A673 (cell line): ENCODE measurements at regions of chr1 and their contacts with region 1.

Region 1: DNA sequence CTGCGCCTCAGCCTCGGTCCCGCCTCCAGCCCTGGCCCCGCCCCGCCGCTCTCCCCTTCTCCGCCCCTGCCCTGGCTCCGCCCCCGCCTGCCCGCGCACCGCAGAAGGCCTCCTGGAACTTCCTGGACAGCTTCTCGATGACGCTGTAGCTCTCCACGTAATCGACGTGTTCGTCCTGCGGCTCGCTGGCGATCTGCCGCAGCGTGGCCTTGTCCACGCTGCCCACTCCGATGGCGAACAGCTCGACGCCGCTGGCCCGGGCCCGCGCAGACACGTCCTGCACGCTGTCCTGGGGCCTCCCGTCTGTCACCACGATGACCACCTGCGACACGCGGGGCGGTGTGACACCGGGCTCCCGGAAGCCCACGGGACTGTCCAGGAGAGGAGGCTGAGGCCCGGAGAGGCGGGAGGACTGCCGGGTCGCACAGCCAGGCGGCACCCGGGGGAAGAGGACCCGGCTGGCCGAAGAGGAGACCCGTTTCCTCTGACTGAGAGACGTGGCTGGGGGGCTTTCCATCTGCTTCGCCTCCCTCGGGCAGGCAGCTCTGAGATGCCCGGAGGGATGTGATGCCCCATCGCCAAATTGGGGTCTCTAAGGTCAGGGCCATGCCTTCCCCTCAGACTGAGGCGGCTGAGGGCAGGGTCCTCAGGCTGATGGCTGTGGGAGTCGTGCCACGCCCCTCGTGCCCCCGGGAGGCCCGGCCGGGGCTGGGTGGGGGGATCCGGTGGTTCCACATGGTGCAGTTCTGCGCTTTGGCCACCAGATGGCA is 4.6 kb downstream of the MATN1 start:
- DNase-seq: peak; percentile 96
- H3K4me3 ChIP-seq: peak overlapping the region; percentile 64
- H3K27ac ChIP-seq: peak overlapping the region; percentile 92
- H3K4me1 ChIP-seq: peaks cover 5% of the 10 kb centered on the region
- H3K27me3 ChIP-seq: no peaks in the 10 kb centered on the region
- CTCF ChIP-seq: peak; percentile 94

Region 2: GRCh38 chr1:29579821-29580425 is 1138.9 kb before region 1 on chr1:
- CTCF ChIA-PET with region 1: no interaction called
- POLR2A ChIA-PET with region 1: interaction called, 15 read pairs
- intact Hi-C with region 1: no loop called
- DNase-seq: no peak
- H3K4me3 ChIP-seq: no peak overlapping the region
- H3K27ac ChIP-seq: no peak overlapping the region
- H3K4me1 ChIP-seq: no peaks in the 10 kb centered on the region
- H3K27me3 ChIP-seq: peaks cover 21% of the 10 kb centered on the region
- CTCF ChIP-seq: no peak

Region 3: GRCh38 chr1:30779294-30780071 is 60.7 kb after region 1 on chr1:
- CTCF ChIA-PET with region 1: interaction called, 56 read pairs
- POLR2A ChIA-PET with region 1: no interaction called
- intact Hi-C with region 1: loop called (anchors 1 kb)
- DNase-seq: peak; percentile 86
- H3K4me3 ChIP-seq: no peak overlapping the region
- H3K27ac ChIP-seq: no peak overlapping the region
- H3K4me1 ChIP-seq: peaks cover 24% of the 10 kb centered on the region
- H3K27me3 ChIP-seq: no peaks in the 10 kb centered on the region
- CTCF ChIP-seq: peak; percentile 95

Region 4: GRCh38 chr1:30911046-30911954 is 192.5 kb after region 1 on chr1:
- CTCF ChIA-PET with region 1: interaction called, 14 read pairs
- POLR2A ChIA-PET with region 1: no interaction called
- intact Hi-C with region 1: loop called (anchors 1 kb)
- DNase-seq: peak; percentile 86
- H3K4me3 ChIP-seq: no peak overlapping the region
- H3K27ac ChIP-seq: no peak overlapping the region
- H3K4me1 ChIP-seq: peaks cover 8% of the 10 kb centered on the region
- H3K27me3 ChIP-seq: peaks cover 12% of the 10 kb centered on the region
- CTCF ChIP-seq: peak; percentile 81

Region 5: GRCh38 chr1:30929135-30929889 is 210.5 kb after region 1 on chr1:
- CTCF ChIA-PET with region 1: interaction called, 10 read pairs
- POLR2A ChIA-PET with region 1: no interaction called
- intact Hi-C with region 1: loop called (anchors 5 kb)
- DNase-seq: peak; percentile 61
- H3K4me3 ChIP-seq: no peak overlapping the region
- H3K27ac ChIP-seq: no peak overlapping the region
- H3K4me1 ChIP-seq: no peaks in the 10 kb centered on the region
- H3K27me3 ChIP-seq: no peaks in the 10 kb centered on the region
- CTCF ChIP-seq: peak; percentile 75